Breast epithelium (tissue), 4 donors: ENCODE measurements at regions of chr18 and their contacts with region 1.

Region 1: GRCh38 chr18:8890957-8891464 is 185.7 kb downstream of the MTCL1 start:
- DNase-seq: no peak
- H3K4me3 ChIP-seq: no peak overlapping the region
- H3K27ac ChIP-seq: no peak overlapping the region
- H3K4me1 ChIP-seq: no peaks in the 10 kb centered on the region
- H3K27me3 ChIP-seq: no peaks in the 10 kb centered on the region
- CTCF ChIP-seq: no peak
- POLR2A ChIP-seq: no peak

Region 2: DNA sequence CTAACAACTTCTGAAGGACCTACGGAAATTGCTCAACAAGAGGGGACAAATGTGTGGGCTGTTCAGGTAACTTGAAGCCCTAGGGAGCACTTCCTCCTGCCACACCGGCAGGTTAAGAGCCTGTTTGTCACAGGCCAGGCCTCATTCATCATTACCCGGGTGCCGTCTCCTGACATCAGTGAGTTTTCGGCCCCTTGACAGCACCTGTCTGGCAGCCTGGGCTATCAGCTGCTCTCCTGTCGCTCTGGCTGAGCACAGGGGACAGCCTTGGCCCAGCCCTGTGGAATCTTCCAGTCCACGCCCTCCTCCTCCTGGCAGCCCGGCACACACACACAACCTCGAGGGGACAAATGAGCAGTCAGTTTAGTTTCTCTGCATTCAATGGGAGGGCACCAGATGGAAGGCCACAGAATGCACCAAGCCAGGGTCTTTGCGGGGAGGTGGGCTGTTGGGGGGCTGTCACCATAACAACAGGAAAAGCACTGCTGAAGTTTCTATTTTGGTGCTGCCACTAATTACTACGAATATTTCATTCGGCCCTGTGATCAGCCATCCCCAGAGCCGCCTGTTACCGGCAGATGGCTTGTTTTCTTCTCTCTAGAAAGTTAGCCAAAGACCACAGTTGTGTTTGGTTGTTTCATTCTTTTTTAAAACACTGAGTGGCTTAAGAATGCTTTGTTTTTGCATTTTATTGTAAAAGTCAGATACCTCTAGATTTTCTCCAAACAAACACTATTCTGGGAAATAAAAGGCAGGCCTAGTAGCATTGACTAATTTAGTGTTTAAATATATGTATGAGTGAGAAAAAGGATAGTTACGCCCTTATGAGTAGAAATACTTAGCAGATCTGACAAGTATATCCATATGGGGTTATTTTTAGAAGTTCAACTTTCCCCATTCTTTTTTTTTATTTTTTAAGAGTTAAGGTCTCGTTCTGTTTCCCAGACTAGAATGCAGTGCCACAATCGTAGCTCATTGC is 21.6 kb after region 1 on chr18:
- intact Hi-C with region 1: loop called (anchors 2 kb)
- DNase-seq: no peak
- H3K4me3 ChIP-seq: no peak overlapping the region
- H3K27ac ChIP-seq: no peak overlapping the region
- H3K4me1 ChIP-seq: no peaks in the 10 kb centered on the region
- H3K27me3 ChIP-seq: no peaks in the 10 kb centered on the region
- CTCF ChIP-seq: no peak
- POLR2A ChIP-seq: no peak

Region 3: DNA sequence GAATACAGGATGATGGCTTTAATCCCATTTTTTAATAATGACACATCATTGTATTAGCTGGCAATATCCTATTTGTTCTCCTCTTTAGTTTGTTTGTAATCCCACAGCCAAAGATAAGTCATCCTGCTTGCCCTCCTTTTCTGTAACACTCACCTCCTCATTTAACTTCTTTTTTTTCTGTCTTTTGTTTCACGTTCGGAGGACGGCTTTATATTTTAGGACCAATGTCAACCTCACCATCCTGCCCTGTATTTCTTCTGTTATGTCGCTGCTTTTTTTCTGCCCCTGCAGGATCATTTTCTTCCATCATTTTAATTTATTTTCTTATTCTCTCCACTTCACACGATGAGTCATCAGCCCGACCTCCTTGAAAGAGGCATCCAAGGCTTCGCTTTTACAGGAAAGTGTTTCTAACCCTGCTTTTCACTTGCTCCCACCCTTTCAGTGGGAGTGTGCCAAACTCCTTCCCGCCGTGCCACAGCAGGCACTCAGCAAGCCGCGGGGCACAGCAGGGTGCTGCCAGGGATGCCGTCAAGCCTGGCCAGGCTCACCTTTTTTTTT is 828.5 kb after region 1 on chr18:
- intact Hi-C with region 1: no loop called
- DNase-seq: peak; percentile 67 to 77
- H3K4me3 ChIP-seq: peak overlapping the region in 2 of 3 donors; percentile 9 to 34
- H3K27ac ChIP-seq: peak overlapping the region; percentile 66 to 68
- H3K4me1 ChIP-seq: no peaks in the 10 kb centered on the region
- H3K27me3 ChIP-seq: no peaks in the 10 kb centered on the region
- CTCF ChIP-seq: no peak
- POLR2A ChIP-seq: no peak